Naive thymus-derived CD8-positive, alpha-beta T cell (primary cell): ENCODE measurements at regions of chr2 and their contacts with region 1.

Region 1: DNA sequence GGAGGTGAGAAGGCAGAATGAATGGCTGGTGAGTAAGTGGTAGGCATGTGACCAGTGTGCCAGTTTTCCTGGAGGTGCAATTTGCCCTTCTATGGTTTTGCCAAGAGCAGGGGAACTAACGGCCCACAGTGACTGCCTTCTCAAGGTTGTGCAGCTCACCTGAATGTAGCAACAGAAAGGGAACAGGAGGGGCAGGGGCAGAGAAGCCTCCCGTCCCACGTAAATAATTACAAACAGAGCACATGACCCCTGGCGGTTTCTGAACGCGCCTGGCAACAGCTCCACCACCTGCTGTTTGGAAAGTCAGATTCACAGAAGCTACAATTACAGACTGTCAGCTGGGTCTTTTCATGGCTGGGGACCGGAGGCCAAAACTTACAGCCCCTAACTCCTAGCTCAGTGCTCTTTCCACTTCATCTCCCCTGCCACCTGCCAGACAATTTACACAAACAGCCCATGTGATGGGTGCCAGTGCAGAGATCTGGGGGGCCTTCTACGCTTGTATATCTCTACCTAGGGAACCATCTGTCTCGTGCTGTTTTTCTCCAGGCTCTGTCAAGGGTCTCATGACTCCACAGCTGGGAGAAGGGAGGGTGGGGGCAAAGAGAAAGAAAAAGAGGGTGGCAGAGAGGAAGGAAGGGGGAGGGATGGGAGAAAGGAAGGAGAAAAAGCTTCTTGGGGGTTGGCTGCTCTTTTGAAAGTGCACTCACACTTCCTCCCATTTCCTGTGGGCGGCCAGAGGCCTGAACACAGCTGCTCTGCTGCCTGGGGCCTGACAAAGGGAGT is 69.6 kb downstream of the POLR1A start:
- DNase-seq: peak; percentile 39 to 88 (median 76)
- ATAC-seq: peak; percentile 43 to 63
- H3K4me3 Mint-ChIP-seq: peak overlapping the region; percentile 74 to 89 (median 84)
- H3K27ac Mint-ChIP-seq: peak overlapping the region; percentile 98 to 100 (median 100)
- H3K4me1 Mint-ChIP-seq: peaks cover 51 to 96% (median 87%) of the 10 kb centered on the region in 4 donors
- H3K27me3 Mint-ChIP-seq: peaks cover 0 to 2% (median 0%) of the 10 kb centered on the region in 5 donors

Region 2: DNA sequence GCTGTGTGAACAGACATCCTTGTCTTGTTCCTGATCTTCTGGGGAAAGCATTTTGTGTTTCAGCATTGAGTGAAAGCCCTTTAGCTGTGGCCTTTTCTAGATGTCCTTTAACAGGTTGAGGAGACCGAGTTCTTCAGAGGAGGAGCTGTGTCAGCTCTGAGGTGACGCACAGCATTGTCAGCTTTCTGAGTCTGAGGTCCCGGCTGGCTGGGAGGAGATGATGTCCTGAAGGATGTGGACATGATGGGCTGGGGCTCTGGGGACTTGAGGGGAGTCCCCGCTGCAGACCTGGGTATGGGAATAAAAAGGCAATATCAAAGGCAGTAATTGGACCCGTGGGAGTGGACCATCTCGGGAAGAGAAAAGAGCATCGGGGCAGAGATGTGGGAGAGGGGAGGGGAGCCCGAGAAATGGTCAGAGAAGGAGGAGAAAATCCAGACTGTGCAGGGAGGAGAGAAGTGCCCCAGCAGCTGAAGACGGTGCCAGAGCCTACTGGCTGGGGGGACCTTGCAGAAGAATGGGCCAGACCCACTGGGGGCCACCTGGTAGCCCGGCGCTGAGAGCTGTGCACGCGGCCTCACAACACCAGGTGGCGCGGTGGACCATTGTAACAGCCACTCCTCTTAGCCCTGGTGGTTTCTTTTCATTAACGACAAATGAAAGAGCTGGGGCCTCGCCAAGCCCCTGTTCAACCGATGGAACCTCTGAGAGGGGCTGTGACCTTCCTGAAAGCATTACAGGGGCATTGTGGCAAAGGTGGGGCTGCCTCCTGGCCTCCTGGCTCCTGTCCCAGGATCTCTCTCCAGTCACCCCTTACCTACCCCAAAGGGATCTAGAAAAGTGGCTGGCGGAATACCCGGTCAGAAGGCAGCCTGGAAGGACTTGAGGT is 208.8 kb before region 1 on chr2:
- POLR2A ChIA-PET with region 1: interaction called, 12 read pairs
- DNase-seq: peak; percentile 72 to 90 (median 81)
- ATAC-seq: peak; percentile 99
- H3K4me3 Mint-ChIP-seq: peak overlapping the region in 8 of 10 donors; percentile 20 to 59 (median 41)
- H3K27ac Mint-ChIP-seq: peak overlapping the region in 9 of 10 donors; percentile 69 to 90 (median 73)
- H3K4me1 Mint-ChIP-seq: peaks cover 8 to 29% (median 26%) of the 10 kb centered on the region in 4 donors
- H3K27me3 Mint-ChIP-seq: peaks cover 0 to 3% (median 0%) of the 10 kb centered on the region in 5 donors

Region 3: GRCh38 chr2:85852937-85853498 is 183.1 kb before region 1 on chr2:
- POLR2A ChIA-PET with region 1: interaction called, 21 read pairs
- DNase-seq: peak in 9 of 10 donors; percentile 40 to 85 (median 68)
- ATAC-seq: peak; percentile 87 to 90
- H3K4me3 Mint-ChIP-seq: peak overlapping the region; percentile 66 to 90 (median 86)
- H3K27ac Mint-ChIP-seq: peak overlapping the region; percentile 97 to 100 (median 100)
- H3K4me1 Mint-ChIP-seq: peaks cover 33 to 85% (median 81%) of the 10 kb centered on the region in 4 donors
- H3K27me3 Mint-ChIP-seq: no peaks in the 10 kb centered on the region

Region 4: GRCh38 chr2:85865539-85866164 is 170.4 kb before region 1 on chr2:
- POLR2A ChIA-PET with region 1: no interaction called
- DNase-seq: no peak
- ATAC-seq: peak in 1 of 2 donors; percentile 41
- H3K4me3 Mint-ChIP-seq: no peak overlapping the region
- H3K27ac Mint-ChIP-seq: peak overlapping the region in 9 of 10 donors; percentile 16 to 100 (median 53)
- H3K4me1 Mint-ChIP-seq: peaks cover 19 to 69% (median 66%) of the 10 kb centered on the region in 4 donors
- H3K27me3 Mint-ChIP-seq: no peaks in the 10 kb centered on the region

Region 5: GRCh38 chr2:85935170-85935745 is 100.8 kb before region 1 on chr2:
- POLR2A ChIA-PET with region 1: no interaction called
- DNase-seq: no peak
- ATAC-seq: no peak
- H3K4me3 Mint-ChIP-seq: no peak overlapping the region
- H3K27ac Mint-ChIP-seq: no peak overlapping the region
- H3K4me1 Mint-ChIP-seq: peaks cover 12 to 28% (median 20%) of the 10 kb centered on the region in 4 donors
- H3K27me3 Mint-ChIP-seq: peaks cover 0 to 2% (median 0%) of the 10 kb centered on the region in 5 donors

Region 6: GRCh38 chr2:86068136-86068588 is 32.1 kb after region 1 on chr2:
- POLR2A ChIA-PET with region 1: interaction called, 11 read pairs
- DNase-seq: peak in 9 of 10 donors; percentile 4 to 73 (median 36)
- ATAC-seq: peak; percentile 98 to 100
- H3K4me3 Mint-ChIP-seq: peak overlapping the region in 9 of 10 donors; percentile 16 to 79 (median 56)
- H3K27ac Mint-ChIP-seq: peak overlapping the region in 9 of 10 donors; percentile 9 to 90 (median 71)
- H3K4me1 Mint-ChIP-seq: peaks cover 8 to 34% (median 16%) of the 10 kb centered on the region in 4 donors
- H3K27me3 Mint-ChIP-seq: no peaks in the 10 kb centered on the region